ENCODE measurements at regions of chr1 and their contacts with region 1.

Region 1: GRCh38 chr1:37752583-37753471 is 12.1 kb downstream of the EPHA10 start:
- DNase-seq: peak; percentile 49 to 70
- H3K4me3 ChIP-seq: peak overlapping the region; percentile 55
- H3K27ac ChIP-seq: no peak overlapping the region
- H3K4me1 ChIP-seq: no peaks in the 10 kb centered on the region
- H3K27me3 ChIP-seq: peaks cover 6% of the 10 kb centered on the region
- CTCF ChIP-seq: no peak

Region 2: DNA sequence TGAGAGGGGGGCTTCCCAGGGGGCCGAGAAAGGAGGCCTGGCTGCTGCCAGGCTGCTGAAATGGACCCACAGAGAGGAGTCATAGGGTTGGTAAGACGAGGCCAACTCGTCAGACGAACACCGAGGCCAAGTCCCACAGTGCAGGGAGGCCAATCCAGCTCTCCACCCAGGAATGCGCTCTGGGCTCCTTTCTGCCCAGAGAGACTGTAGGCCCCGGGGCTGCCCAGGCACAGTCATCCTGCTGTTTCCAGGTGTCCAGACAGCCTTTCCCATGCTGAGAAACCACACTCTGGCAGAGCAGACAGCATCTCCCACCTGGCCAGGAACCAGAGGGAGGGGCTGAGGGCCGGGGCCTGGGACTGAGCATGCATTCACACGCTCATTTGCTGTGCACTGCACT is 91.4 kb before region 1 on chr1:
- CTCF ChIA-PET with region 1: no interaction called
- POLR2A ChIA-PET with region 1: no interaction called
- intact Hi-C with region 1: no loop called
- DNase-seq: peak in 1 of 2 experiments; percentile 23
- H3K4me3 ChIP-seq: no peak overlapping the region
- H3K27ac ChIP-seq: no peak overlapping the region
- H3K4me1 ChIP-seq: no peaks in the 10 kb centered on the region
- H3K27me3 ChIP-seq: peaks cover 43% of the 10 kb centered on the region
- CTCF ChIP-seq: no peak

Region 3: DNA sequence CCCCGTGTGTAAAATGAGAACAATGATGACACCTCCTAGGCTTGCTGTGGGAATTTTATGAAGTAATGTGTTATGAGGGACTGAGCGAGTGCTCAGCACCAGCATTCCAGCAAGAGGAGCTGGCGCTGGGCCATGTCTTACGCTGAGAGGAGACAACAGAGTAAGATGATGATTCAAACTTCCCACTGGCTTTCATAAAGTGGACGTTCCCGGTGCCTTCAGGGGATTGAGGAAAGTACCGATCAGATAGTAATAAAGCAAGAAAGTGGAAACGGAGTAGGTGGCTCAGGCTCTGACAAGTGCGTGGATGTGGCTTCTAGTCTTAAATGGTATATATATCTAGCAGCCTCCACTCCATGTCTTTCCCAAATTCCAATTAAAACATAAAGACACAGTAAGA is 11.7 kb before region 1 on chr1:
- CTCF ChIA-PET with region 1: interaction called, 14 read pairs
- POLR2A ChIA-PET with region 1: no interaction called
- intact Hi-C with region 1: no loop called
- DNase-seq: peak in 1 of 2 experiments; percentile 64
- H3K4me3 ChIP-seq: no peak overlapping the region
- H3K27ac ChIP-seq: no peak overlapping the region
- H3K4me1 ChIP-seq: peaks cover 14% of the 10 kb centered on the region
- H3K27me3 ChIP-seq: no peaks in the 10 kb centered on the region
- CTCF ChIP-seq: no peak